ENCODE measurements at regions of chr5 and their contacts with region 1.

Region 1: GRCh38 chr5:171614971-171615653 is 170.5 kb upstream of the SMIM23 start:
- DNase-seq: no peak
- H3K4me3 ChIP-seq: no peak overlapping the region
- H3K27ac ChIP-seq: no peak overlapping the region
- H3K4me1 ChIP-seq: no peaks in the 10 kb centered on the region
- H3K27me3 ChIP-seq: peaks cover 12% of the 10 kb centered on the region
- CTCF ChIP-seq: no peak
- EP300 ChIP-seq: no peak
- POLR2A ChIP-seq: no peak

Region 2: GRCh38 chr5:170603578-170604565 is 1011.2 kb before region 1 on chr5:
- in situ Hi-C with region 1: no loop called
- intact Hi-C with region 1: loop called (anchors 10 kb)
- DNase-seq: peak; percentile 30
- H3K4me3 ChIP-seq: no peak overlapping the region
- H3K27ac ChIP-seq: no peak overlapping the region
- H3K4me1 ChIP-seq: no peaks in the 10 kb centered on the region
- H3K27me3 ChIP-seq: no peaks in the 10 kb centered on the region
- CTCF ChIP-seq: peak; percentile 38 to 66 (median 55)
- EP300 ChIP-seq: no peak
- POLR2A ChIP-seq: no peak